Colonic mucosa (tissue), 4 donors: ENCODE measurements at regions of chr7 and their contacts with region 1.

Region 1: DNA sequence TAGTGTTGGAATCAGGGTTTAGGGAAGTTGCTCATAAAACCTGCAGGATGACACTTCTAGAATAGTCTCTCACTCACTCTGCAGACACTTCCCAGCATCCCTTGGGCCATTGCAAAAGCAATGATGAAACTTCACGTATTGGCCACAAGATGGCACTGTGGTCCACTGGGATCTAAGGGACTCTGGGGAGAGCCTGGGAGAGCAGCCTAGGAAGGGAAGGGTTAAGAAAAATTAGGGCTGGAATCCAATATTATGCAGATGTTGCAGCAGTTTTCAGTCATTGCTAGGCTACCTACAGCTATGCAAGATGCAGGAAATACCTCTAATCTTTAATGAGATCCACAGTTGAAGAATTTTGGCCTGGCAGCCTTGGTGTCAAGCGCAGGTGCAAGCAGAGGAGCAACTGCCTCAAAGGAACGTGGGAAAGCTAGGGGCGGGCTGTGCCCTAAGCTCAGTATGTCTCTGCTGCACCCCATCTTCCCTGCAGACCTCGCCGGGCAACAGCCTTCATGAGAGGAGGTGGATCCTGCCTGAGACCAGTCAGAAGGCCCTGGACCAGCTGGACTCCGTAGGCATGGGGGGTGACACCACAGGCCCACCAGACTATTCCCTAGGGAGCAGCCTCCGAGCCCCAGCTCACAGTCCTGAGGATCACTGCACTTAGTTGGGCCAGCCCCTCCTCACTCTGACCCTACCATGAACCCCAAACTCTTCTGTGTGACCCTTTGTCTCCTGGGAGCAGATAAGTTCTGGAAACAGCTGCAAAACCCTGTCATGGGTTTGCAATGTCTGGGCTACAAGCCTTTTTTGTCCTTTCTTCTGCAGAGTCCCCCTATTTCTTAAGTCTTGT is 127.9 kb upstream of the PRSS58 start:
- DNase-seq: peak; percentile 63
- H3K4me3 ChIP-seq: no peak overlapping the region
- H3K27ac ChIP-seq: no peak overlapping the region
- H3K4me1 ChIP-seq: no peaks in the 10 kb centered on the region
- H3K27me3 ChIP-seq: no peaks in the 10 kb centered on the region
- CTCF ChIP-seq: peak; percentile 54

Region 2: DNA sequence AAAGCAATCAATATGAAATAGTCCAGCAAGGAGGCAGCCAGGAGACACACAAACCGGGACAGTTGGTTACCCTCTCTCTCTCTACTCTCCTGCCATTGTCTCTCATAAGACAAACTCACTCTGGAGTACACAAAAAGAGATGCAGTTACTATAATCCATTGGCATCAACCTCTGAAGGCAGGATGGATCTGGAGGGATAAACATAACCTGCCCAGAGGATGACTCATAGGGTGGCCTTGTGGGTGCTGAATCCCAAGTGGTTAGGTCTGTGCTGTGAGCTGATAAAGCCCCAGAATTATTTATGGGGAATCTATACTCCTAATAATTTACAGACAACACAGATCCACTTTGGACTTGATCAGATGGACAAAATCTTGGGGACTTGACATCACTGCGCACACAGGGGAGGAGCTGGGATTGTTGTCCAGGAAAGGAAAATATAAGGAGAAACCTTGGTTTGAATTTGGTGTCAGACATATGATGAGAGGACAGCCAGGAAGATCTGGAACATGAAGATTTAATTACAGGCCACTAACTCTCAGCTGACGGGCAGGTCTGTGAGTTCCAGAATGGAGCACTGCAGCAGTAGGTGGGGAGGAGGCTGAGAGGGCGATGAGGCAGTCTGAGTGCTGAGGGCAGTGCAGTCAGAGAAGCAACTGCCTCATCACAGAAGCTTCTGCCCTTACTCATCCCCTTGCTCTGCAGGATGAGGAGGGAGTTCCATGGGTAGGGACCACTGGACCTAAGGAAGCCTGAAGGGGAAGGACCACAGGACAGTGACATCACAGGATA is 13.9 kb before region 1 on chr7:
- intact Hi-C with region 1: no loop called
- DNase-seq: no peak
- H3K4me3 ChIP-seq: no peak overlapping the region
- H3K27ac ChIP-seq: no peak overlapping the region
- H3K4me1 ChIP-seq: no peaks in the 10 kb centered on the region
- H3K27me3 ChIP-seq: no peaks in the 10 kb centered on the region
- CTCF ChIP-seq: no peak

Region 3: DNA sequence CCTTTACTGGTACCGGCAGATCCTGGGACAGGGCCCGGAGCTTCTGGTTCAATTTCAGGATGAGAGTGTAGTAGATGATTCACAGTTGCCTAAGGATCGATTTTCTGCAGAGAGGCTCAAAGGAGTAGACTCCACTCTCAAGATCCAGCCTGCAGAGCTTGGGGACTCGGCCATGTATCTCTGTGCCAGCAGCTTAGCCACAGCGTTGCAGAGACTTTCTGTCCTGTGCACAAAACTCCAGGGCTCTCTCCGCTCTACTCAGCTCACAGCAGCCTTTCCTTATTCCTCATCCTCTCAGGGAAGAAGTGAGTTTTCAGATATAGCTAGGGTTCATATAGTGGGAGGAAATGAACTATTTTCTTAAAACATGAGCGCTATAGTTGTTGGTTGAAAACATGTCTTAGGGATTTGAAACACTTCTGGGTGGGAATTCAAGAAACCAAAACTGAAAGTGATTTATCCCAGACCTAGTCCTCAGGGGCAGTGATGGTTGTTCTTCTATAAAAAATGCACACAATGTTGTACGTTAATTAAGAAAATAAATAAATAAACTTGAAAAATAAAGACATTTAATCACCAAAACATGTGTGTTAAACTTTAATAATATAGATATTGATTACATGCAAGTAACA is 22.3 kb after region 1 on chr7:
- intact Hi-C with region 1: loop called (anchors 2 kb)
- DNase-seq: no peak
- H3K4me3 ChIP-seq: no peak overlapping the region
- H3K27ac ChIP-seq: no peak overlapping the region
- H3K4me1 ChIP-seq: no peaks in the 10 kb centered on the region
- H3K27me3 ChIP-seq: no peaks in the 10 kb centered on the region
- CTCF ChIP-seq: no peak

Region 4: DNA sequence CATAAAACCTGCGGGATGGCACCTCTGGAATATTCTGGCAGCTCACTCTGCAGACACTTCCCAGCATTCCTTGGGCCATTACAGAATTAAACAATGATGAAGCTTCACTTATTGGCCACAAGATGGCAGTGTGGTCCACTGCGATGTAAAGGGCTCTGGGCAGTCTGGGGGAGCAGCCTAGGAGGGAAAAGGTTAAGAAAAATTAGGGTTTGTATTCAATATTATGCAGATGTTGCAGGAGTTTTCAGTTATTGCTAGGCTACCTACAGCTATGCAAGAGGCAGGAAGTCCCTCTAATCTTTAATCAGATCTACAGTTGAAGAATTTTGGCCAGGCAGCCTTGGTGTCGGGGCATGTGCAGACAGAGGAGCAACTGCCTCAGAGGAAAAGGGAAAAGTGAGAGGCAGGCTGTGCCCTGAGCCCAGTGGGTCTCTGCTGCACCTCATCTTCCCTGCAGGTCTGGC is 130.4 kb after region 1 on chr7:
- intact Hi-C with region 1: no loop called
- DNase-seq: peak; percentile 60
- H3K4me3 ChIP-seq: no peak overlapping the region
- H3K27ac ChIP-seq: no peak overlapping the region
- H3K4me1 ChIP-seq: no peaks in the 10 kb centered on the region
- H3K27me3 ChIP-seq: no peaks in the 10 kb centered on the region
- CTCF ChIP-seq: peak; percentile 81